ENCODE measurements at regions of chr9 and their contacts with region 1.

Region 1: DNA sequence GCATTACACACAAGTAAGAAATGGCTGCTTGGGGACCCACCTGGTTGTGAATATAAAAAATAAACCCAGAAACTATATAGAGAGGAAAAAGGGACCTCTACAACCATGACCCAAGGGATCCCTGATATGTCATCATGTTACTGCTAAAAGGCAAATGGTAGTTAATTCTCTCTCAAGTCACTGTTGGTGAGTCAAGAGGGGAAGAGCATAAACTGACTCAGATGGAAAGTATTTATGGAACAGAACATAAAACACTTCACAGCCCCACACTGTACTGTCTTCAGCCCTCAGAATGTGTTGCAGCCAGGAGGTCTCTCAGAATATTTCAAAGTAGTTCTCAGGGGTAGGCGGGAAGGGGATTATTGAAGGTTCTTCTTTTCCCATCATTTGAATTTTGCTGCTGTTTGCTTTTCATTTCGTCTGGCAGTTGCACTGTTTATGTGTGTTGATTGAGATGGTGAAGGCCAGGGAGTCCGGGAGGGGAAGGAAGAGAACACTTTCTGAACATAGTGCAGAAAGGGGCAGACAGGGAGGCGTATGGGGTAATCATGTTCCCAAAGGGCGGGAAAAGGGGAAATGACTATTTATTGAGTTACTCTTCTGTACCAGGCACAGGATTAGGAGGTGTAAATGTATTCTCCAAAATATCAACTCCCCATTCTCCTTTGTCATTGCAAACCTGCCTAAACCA is 85.5 kb downstream of the TEK start:
- DNase-seq: no peak
- ATAC-seq: peak in 1 of 4 donors; percentile 27
- H3K4me3 ChIP-seq: no peak overlapping the region
- H3K27ac ChIP-seq: peak overlapping the region in 1 of 12 donors; percentile 25
- H3K4me1 ChIP-seq: peaks cover 0 to 52% (median 5%) of the 10 kb centered on the region in 12 donors
- H3K27me3 ChIP-seq: no peaks in the 10 kb centered on the region
- CTCF ChIP-seq: no peak
- POLR2A ChIP-seq: no peak

Region 2: DNA sequence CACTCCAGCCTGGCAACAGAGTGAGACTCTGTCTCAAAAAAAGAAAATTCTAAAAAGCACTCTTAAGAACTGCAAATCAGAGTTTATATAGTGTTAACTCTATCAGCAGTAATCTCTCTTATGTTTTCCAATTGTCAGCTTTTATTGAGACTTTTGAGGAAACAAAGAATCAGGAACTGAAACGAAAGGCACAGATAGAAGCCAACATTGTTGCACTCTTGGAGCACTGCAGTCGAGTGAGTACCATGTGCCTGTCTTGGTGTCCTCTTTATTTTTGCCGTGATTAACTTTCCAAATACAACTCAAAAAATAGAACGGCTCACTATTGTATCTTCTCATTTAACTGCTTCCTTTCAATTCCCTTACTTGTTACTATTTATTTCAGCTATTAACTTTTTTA is 147.4 kb before region 1 on chr9:
- intact Hi-C with region 1: loop called in 1 of 10 experiments (anchors 10 kb)
- DNase-seq: no peak
- ATAC-seq: peak in 1 of 4 donors; percentile 27
- H3K4me3 ChIP-seq: no peak overlapping the region
- H3K27ac ChIP-seq: peak overlapping the region in 1 of 12 donors; percentile 24
- H3K4me1 ChIP-seq: no peaks in the 10 kb centered on the region
- H3K27me3 ChIP-seq: no peaks in the 10 kb centered on the region
- CTCF ChIP-seq: no peak
- POLR2A ChIP-seq: no peak

Region 3: DNA sequence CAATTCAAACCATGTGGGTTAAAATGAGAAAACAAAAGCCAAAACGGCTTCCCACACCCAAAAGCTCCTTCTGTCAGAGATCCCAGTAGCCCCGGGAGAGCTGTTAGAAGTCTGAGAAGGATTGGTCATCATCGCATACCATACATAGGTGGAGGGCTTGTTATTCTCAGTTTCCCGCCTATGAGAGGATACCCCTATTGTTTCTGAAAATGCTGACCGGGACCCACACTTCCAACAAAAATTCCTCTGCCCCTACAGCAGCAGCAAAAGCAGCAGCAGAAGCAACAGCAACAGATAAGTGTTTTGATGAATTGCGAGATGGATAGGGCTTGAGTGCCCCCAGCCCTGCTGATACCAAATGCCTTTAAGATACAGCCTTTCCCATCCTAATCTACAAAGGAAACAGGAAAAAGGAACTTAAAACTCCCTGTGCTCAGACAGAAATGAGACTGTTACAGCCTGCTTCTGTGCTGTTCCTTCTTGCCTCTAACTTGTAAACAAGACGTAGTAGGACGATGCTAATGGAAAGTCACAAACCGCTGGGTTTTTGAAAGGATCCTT is 85.5 kb before region 1 on chr9 and contains the start of gene TEK:
- intact Hi-C with region 1: loop called in 4 of 10 experiments (anchors 2 to 5 kb)
- DNase-seq: peak in 1 of 5 donors; percentile 19
- ATAC-seq: peak; percentile 39 to 68 (median 57)
- H3K4me3 ChIP-seq: peak within 1 kb of the TSS; percentile 1 to 64 (median 52)
- H3K27ac ChIP-seq: peak within 1 kb of the TSS; percentile 19 to 88 (median 73)
- H3K4me1 ChIP-seq: peaks cover 0 to 21% (median 0%) of the 10 kb centered on the region in 12 donors
- H3K27me3 ChIP-seq: no peaks in the 10 kb centered on the region
- CTCF ChIP-seq: no peak
- POLR2A ChIP-seq: peak in 1 of 2 donors; percentile 46
- total RNA-seq, gene TEK: 11.9 to 36.5 (median 19.2) TPM

Region 4: GRCh38 chr9:27117489-27118135 is 76.9 kb before region 1 on chr9:
- intact Hi-C with region 1: loop called in 4 of 10 experiments (anchors 2 to 5 kb)
- DNase-seq: peak; percentile 74 to 90 (median 79)
- ATAC-seq: peak; percentile 90 to 97 (median 96)
- H3K4me3 ChIP-seq: no peak overlapping the region
- H3K27ac ChIP-seq: peak overlapping the region; percentile 44 to 85 (median 68)
- H3K4me1 ChIP-seq: peaks cover 0 to 49% (median 19%) of the 10 kb centered on the region in 12 donors
- H3K27me3 ChIP-seq: no peaks in the 10 kb centered on the region
- CTCF ChIP-seq: no peak
- POLR2A ChIP-seq: no peak